Mammary epithelial cell (primary cell): ENCODE measurements at regions of chr5 and their contacts with region 1.

Region 1: GRCh38 chr5:111901296-111901695 is 144.3 kb upstream of the NREP start:
- DNase-seq: no peak
- H3K4me3 ChIP-seq: no peak overlapping the region
- H3K27ac ChIP-seq: no peak overlapping the region
- H3K4me1 ChIP-seq: no peaks in the 10 kb centered on the region
- H3K27me3 ChIP-seq: no peaks in the 10 kb centered on the region
- CTCF ChIP-seq: no peak

Region 2: DNA sequence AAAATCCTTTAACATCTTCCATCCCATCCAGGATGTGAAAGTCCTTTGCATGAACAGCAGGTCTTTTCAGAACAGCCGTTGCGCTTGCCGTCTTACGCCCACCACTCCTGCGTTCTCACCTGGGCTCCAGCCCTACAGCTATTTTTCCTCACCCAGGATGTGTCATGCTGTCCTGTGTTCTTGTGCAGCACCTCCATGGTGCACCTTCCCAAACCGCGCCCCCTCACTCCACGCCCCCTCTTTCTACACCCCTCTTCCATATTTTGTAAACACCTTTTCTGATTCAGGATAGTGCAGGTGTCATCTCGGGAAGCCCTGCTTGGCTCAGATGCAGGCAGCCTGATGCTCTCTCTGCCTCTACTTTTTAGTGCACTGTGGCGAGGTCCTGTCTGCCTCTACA is 658.7 kb before region 1 on chr5:
- CTCF ChIA-PET with region 1: no interaction called
- dilution Hi-C with region 1: no loop called
- in situ Hi-C with region 1: no loop called
- intact Hi-C with region 1: no loop called
- DNase-seq: no peak
- H3K4me3 ChIP-seq: no peak overlapping the region
- H3K27ac ChIP-seq: no peak overlapping the region
- H3K4me1 ChIP-seq: peaks cover 1% of the 10 kb centered on the region
- H3K27me3 ChIP-seq: no peaks in the 10 kb centered on the region
- CTCF ChIP-seq: no peak

Region 3: GRCh38 chr5:111976705-111977435 is 75.6 kb after region 1 on chr5:
- CTCF ChIA-PET with region 1: no interaction called
- dilution Hi-C with region 1: no loop called
- in situ Hi-C with region 1: no loop called
- intact Hi-C with region 1: loop called (anchors 2 kb)
- DNase-seq: no peak
- H3K4me3 ChIP-seq: no peak overlapping the region
- H3K27ac ChIP-seq: no peak overlapping the region
- H3K4me1 ChIP-seq: no peaks in the 10 kb centered on the region
- H3K27me3 ChIP-seq: peaks cover 2% of the 10 kb centered on the region
- CTCF ChIP-seq: no peak